ENCODE measurements at regions of chr17 and their contacts with region 1.

Region 1: GRCh38 chr17:73697872-73698271 is 53.6 kb upstream of the SDK2 start:
- DNase-seq: no peak
- H3K4me3 ChIP-seq: no peak overlapping the region
- H3K27ac ChIP-seq: no peak overlapping the region
- H3K4me1 ChIP-seq: no peaks in the 10 kb centered on the region
- H3K27me3 ChIP-seq: no peaks in the 10 kb centered on the region
- CTCF ChIP-seq: peak in 1 of 6 experiments; percentile 23
- POLR2A ChIP-seq: no peak

Region 2: GRCh38 chr17:73444021-73444420 is 253.9 kb before region 1 on chr17:
- intact Hi-C with region 1: loop called (anchors 5 kb)
- DNase-seq: no peak
- H3K4me3 ChIP-seq: no peak overlapping the region
- H3K27ac ChIP-seq: no peak overlapping the region
- H3K4me1 ChIP-seq: no peaks in the 10 kb centered on the region
- H3K27me3 ChIP-seq: no peaks in the 10 kb centered on the region
- CTCF ChIP-seq: no peak
- POLR2A ChIP-seq: no peak

Region 3: DNA sequence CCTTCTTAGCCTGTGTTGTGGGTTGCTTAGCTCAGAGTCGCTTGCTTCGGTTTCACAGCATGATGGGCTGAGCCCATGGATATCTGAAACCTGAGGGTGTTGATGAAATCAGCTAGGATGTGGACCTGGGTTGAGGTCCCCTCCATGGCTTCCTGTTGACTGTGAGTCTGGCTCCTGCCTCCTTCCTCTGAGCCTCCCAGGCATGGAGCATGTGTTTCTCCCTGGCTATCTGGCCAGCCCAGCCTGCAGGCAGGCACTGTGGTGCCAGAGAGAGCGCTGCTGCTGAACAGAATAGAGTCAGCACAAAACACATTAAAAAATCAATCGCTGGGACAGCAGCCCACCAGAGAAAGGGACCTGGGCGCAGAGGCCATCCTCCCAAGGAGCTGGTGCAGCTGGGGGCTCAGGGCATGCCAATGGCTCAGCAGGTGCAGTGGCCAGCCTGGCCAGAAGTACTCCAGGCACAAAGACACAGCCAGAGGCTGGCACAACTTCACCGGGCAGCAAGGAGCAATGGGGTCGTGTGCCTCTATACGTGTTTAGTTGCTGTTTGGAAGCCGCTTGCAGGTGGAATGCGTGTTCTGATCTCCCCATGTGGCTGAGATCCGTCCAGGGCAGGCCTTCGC is 705.8 kb after region 1 on chr17:
- intact Hi-C with region 1: no loop called
- DNase-seq: no peak
- H3K4me3 ChIP-seq: no peak overlapping the region
- H3K27ac ChIP-seq: no peak overlapping the region
- H3K4me1 ChIP-seq: peaks cover 0 to 7% of the 10 kb centered on the region in 2 donors
- H3K27me3 ChIP-seq: no peaks in the 10 kb centered on the region
- CTCF ChIP-seq: no peak
- POLR2A ChIP-seq: no peak

Measured in thyroid gland (tissue), 4 donors.